ENCODE measurements at regions of chr1 and their contacts with region 1.

Region 1: GRCh38 chr1:234755449-234755863 is 145.5 kb upstream of the IRF2BP2 start:
- DNase-seq: no peak
- ATAC-seq: no peak
- H3K4me3 ChIP-seq: no peak overlapping the region
- H3K27ac ChIP-seq: no peak overlapping the region
- H3K4me1 ChIP-seq: peaks cover 6% of the 10 kb centered on the region
- H3K27me3 ChIP-seq: no peaks in the 10 kb centered on the region
- CTCF ChIP-seq: no peak
- EP300 ChIP-seq: no peak
- POLR2A ChIP-seq: no peak
- RAD21 ChIP-seq: no peak

Region 2: DNA sequence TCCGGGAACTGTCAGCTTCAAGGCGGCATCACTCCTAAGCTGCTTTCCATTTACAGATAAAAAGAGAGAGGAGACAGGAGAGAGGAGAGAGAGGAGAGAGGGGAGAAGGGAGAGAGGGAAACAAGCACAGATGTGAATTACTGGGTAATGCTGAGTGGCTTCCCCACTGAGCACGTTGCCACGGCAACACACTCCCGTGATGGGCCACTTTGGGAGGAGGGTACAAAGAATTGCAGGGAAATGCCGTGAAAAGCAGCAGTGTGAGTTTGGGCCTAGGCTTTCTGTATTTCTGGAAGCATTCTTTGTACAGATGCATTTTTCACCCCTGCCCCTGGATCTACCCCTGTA is 17.5 kb before region 1 on chr1:
- CTCF ChIA-PET with region 1: interaction called, 10 read pairs
- POLR2A ChIA-PET with region 1: interaction called, 14 read pairs
- RAD21 ChIA-PET with region 1: interaction called, 3 read pairs
- SMC1A ChIA-PET with region 1: interaction called, 6 read pairs
- in situ Hi-C with region 1: no loop called
- intact Hi-C with region 1: no loop called
- DNase-seq: no peak
- ATAC-seq: no peak
- H3K4me3 ChIP-seq: no peak overlapping the region
- H3K27ac ChIP-seq: no peak overlapping the region
- H3K4me1 ChIP-seq: no peaks in the 10 kb centered on the region
- H3K27me3 ChIP-seq: no peaks in the 10 kb centered on the region
- CTCF ChIP-seq: no peak
- EP300 ChIP-seq: no peak
- POLR2A ChIP-seq: no peak
- RAD21 ChIP-seq: no peak

Region 3: DNA sequence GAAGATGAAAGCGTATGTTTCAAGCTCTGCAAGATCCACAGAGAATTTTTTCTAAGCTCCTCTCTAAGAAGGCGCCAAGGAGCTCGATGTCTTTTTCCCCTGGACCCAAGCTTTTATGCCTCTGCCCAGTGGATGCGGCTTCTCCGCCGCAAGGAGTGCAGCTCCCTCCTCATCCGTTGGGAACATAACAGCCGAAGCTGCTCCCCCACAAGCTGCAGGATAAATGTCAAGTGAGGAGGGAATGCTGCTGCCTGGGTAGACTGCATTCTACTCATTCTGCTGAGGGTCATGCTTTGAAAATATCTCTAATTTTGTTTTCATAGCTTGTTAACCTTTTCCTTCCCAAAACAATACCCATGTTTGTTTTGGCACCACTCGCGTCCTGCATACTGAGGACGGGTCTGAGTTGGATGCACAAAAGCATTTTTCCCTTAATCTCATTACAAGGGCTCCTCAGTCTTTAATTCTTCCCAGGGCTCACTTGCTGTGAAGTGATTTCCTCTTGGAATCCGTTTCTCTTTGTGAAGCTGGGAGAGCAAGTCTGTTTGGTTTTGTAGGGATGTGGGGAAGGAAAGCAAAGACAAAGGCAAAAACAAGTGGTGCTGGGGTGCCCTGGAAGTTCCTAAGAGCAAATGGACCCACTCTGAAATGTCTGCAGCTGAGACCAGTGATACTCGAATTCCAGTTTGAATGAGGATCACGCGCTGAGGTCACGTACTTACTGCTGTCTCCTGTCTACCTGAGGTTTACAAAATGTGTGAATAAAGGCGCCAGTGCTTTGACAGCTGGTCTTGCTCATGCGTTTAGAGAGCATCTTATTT is 11.5 kb before region 1 on chr1:
- CTCF ChIA-PET with region 1: interaction called, 10 read pairs
- POLR2A ChIA-PET with region 1: interaction called, 14 read pairs
- RAD21 ChIA-PET with region 1: interaction called, 4 read pairs
- SMC1A ChIA-PET with region 1: interaction called, 12 read pairs
- in situ Hi-C with region 1: no loop called
- intact Hi-C with region 1: no loop called
- DNase-seq: no peak
- ATAC-seq: no peak
- H3K4me3 ChIP-seq: no peak overlapping the region
- H3K27ac ChIP-seq: no peak overlapping the region
- H3K4me1 ChIP-seq: no peaks in the 10 kb centered on the region
- H3K27me3 ChIP-seq: no peaks in the 10 kb centered on the region
- CTCF ChIP-seq: no peak
- EP300 ChIP-seq: no peak
- POLR2A ChIP-seq: no peak
- RAD21 ChIP-seq: no peak

Measured in GM12878 (cell line).